ENCODE measurements at regions of chr16 and their contacts with region 1.

Region 1: GRCh38 chr16:29700253-29700987 is 21.4 kb downstream of the QPRT start:
- DNase-seq: peak; percentile 64
- H3K4me3 Mint-ChIP-seq: peak overlapping the region; percentile 2
- H3K27ac Mint-ChIP-seq: peak overlapping the region; percentile 86
- H3K4me1 Mint-ChIP-seq: peaks cover 29% of the 10 kb centered on the region
- H3K27me3 Mint-ChIP-seq: no peaks in the 10 kb centered on the region

Region 2: GRCh38 chr16:29729116-29729521 is 28.7 kb after region 1 on chr16:
- intact Hi-C with region 1: loop called (anchors 2 kb)
- DNase-seq: no peak
- H3K4me3 Mint-ChIP-seq: no peak overlapping the region
- H3K27ac Mint-ChIP-seq: no peak overlapping the region
- H3K4me1 Mint-ChIP-seq: peaks cover 22% of the 10 kb centered on the region
- H3K27me3 Mint-ChIP-seq: peaks cover 11% of the 10 kb centered on the region

Region 3: GRCh38 chr16:29790183-29790952 is 89.9 kb after region 1 on chr16 and contains the start of gene KIF22:
- intact Hi-C with region 1: loop called (anchors 1 kb)
- DNase-seq: peak; percentile 100
- H3K4me3 Mint-ChIP-seq: peak within 1 kb of the TSS; percentile 98
- H3K27ac Mint-ChIP-seq: peak within 1 kb of the TSS; percentile 93
- H3K4me1 Mint-ChIP-seq: peaks cover 46% of the 10 kb centered on the region
- H3K27me3 Mint-ChIP-seq: no peaks in the 10 kb centered on the region
- total RNA-seq, gene KIF22: 132 and 136 TPM in 2 replicates

Region 4: GRCh38 chr16:29973384-29974246 is 273.2 kb after region 1 on chr16 and contains the start of gene TAOK2:
- intact Hi-C with region 1: no loop called
- DNase-seq: peak; percentile 98
- H3K4me3 Mint-ChIP-seq: peak within 1 kb of the TSS; percentile 93
- H3K27ac Mint-ChIP-seq: peak within 1 kb of the TSS; percentile 87
- H3K4me1 Mint-ChIP-seq: peaks cover 32% of the 10 kb centered on the region
- H3K27me3 Mint-ChIP-seq: no peaks in the 10 kb centered on the region
- total RNA-seq, gene TAOK2: 36.0 and 36.5 TPM in 2 replicates

Region 5: DNA sequence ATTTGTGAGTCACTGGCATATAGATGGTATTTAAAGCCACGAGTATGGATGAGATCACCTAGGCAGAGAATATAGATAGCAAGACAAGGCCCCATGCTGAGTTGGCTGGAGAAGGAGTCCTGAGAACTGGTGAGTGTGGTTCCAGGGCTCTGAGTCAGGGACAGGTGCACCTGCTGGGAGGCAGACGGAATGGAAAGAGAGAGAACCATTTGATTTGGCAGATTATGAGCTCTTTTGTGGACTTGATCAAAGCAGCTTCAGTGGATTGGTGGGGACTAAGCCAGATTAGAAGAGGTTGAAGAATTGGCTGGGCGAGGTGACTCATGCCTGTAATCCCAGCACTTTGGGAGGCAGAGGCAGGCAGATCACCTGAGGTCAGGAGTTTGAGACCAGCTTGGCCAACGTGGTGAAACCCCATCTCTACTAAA is 318.3 kb after region 1 on chr16:
- intact Hi-C with region 1: loop called (anchors 2 kb)
- DNase-seq: no peak
- H3K4me3 Mint-ChIP-seq: no peak overlapping the region
- H3K27ac Mint-ChIP-seq: no peak overlapping the region
- H3K4me1 Mint-ChIP-seq: peaks cover 7% of the 10 kb centered on the region
- H3K27me3 Mint-ChIP-seq: peaks cover 18% of the 10 kb centered on the region

Region 6: GRCh38 chr16:30032083-30032819 is 331.8 kb after region 1 on chr16:
- intact Hi-C with region 1: loop called (anchors 1 kb)
- DNase-seq: peak; percentile 57
- H3K4me3 Mint-ChIP-seq: peak overlapping the region; percentile 27
- H3K27ac Mint-ChIP-seq: no peak overlapping the region
- H3K4me1 Mint-ChIP-seq: peaks cover 12% of the 10 kb centered on the region
- H3K27me3 Mint-ChIP-seq: peaks cover 48% of the 10 kb centered on the region

Measured in activated T-helper 2 cell treated with anti-CD3 and anti-CD28 coated beads, Interferon-gamma antibody, Interleukin-2, Interleukin-4, amounts not matched to agents 10 μg/mL and 5 μg/mL and 100 μg/mL, durations not matched to agents 14 hours and 24 hours and 36 hours (primary cell).